WTC11 (cell line): ENCODE measurements at regions of chr16 and their contacts with region 1.

Region 1: DNA sequence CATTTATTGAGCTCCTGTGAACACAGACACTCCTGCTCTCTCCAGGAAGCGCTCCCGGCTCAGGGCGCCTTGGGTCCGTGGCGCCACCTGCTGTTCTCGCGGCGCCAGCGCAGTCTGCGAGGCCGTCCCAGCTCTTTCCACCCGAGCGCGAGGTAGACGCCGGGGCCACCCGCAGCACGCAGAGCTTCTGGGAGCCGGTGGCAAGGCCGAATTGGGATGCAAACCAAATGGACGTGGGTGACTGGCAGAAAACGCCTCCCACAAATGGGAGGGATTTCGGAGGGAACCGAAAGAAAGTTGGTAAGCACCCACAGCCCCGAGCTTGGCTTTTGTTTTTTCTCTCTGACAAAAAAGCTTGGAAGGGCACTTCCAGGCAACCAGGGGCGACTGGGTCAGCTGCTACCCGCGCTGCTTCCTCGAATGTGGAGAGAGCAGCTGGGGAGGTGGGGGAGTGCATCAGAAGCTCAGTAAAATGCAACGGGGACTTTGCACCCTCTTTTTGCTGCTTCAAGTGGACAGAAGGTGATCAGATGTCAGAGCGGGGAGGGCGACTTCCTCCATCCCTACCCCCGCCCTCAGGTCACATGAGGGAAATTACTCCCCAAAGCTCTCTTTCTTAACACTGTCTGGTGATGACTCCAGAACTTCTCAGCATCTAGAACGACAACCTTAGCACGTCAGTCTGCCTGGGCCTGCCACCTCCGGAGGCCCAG is 13.5 kb upstream of the N4BP1 start:
- DNase-seq: peak; percentile 81
- ATAC-seq: peak; percentile 93
- H3K4me3 Mint-ChIP-seq: peak overlapping the region; percentile 83
- H3K27ac Mint-ChIP-seq: peak overlapping the region; percentile 27; the same call in 1 of the 2 replicates
- H3K4me1 Mint-ChIP-seq: peaks cover 10% of the 10 kb centered on the region
- H3K27me3 Mint-ChIP-seq: no peaks in the 10 kb centered on the region; the same call in 1 of the 2 replicates
- CTCF ChIP-seq: peak; percentile 90

Region 2: DNA sequence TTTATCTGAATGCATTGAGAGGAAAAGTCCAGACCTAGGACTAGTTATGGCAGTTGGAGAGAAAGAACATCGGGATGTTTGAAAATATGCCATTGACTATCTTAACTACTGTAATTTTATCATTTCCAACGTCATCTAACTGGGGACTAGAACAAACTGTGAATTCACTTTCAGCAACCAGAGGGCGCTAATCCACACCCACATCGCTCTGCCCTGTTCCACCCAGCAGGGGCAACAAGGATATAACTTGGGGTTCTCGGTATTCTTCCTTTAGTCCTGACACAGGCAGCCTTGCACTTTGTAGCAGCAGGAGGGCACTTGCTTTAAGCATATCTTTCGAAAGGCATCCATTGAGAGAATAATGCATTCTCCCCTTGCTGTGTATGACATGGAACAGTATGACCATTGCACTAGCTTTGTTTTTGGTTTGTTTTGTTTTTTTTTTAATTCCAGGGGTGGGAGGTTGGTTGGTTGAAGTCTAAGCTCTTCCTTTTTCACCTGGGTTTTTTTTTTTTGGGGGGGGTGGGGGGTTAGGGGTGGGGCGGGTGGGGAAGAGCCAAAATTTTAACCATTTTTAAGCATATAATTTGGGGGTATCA is 269.8 kb before region 1 on chr16:
- CTCF ChIA-PET with region 1: interaction called, 26 read pairs
- POLR2A ChIA-PET with region 1: no interaction called
- DNase-seq: peak; percentile 70
- ATAC-seq: peak; percentile 91
- H3K4me3 Mint-ChIP-seq: no peak overlapping the region
- H3K27ac Mint-ChIP-seq: peak overlapping the region; percentile 86
- H3K4me1 Mint-ChIP-seq: peaks cover 5% of the 10 kb centered on the region
- H3K27me3 Mint-ChIP-seq: no peaks in the 10 kb centered on the region
- CTCF ChIP-seq: peak; percentile 76

Region 3: GRCh38 chr16:48499923-48500381 is 123.5 kb before region 1 on chr16:
- CTCF ChIA-PET with region 1: interaction called, 14 read pairs
- POLR2A ChIA-PET with region 1: no interaction called
- DNase-seq: no peak
- ATAC-seq: no peak
- H3K4me3 Mint-ChIP-seq: no peak overlapping the region
- H3K27ac Mint-ChIP-seq: no peak overlapping the region
- H3K4me1 Mint-ChIP-seq: peaks cover 11% of the 10 kb centered on the region
- H3K27me3 Mint-ChIP-seq: no peaks in the 10 kb centered on the region; the same call in 1 of the 2 replicates
- CTCF ChIP-seq: no peak

Region 4: GRCh38 chr16:48542020-48542473 is 81.4 kb before region 1 on chr16:
- CTCF ChIA-PET with region 1: interaction called, 63 read pairs
- POLR2A ChIA-PET with region 1: no interaction called
- DNase-seq: no peak
- ATAC-seq: peak; percentile 54
- H3K4me3 Mint-ChIP-seq: no peak overlapping the region
- H3K27ac Mint-ChIP-seq: no peak overlapping the region
- H3K4me1 Mint-ChIP-seq: peaks cover 7% of the 10 kb centered on the region; the same call in 1 of the 2 replicates
- H3K27me3 Mint-ChIP-seq: no peaks in the 10 kb centered on the region
- CTCF ChIP-seq: no peak

Region 5: GRCh38 chr16:48596326-48596725 is 27.1 kb before region 1 on chr16:
- CTCF ChIA-PET with region 1: interaction called, 23 read pairs
- POLR2A ChIA-PET with region 1: no interaction called
- DNase-seq: no peak
- ATAC-seq: no peak
- H3K4me3 Mint-ChIP-seq: no peak overlapping the region
- H3K27ac Mint-ChIP-seq: no peak overlapping the region
- H3K4me1 Mint-ChIP-seq: peaks cover 31% of the 10 kb centered on the region
- H3K27me3 Mint-ChIP-seq: peaks cover 11% of the 10 kb centered on the region; the same call in 1 of the 2 replicates
- CTCF ChIP-seq: no peak

Region 6: GRCh38 chr16:48704710-48705109 is 81.2 kb after region 1 on chr16:
- CTCF ChIA-PET with region 1: no interaction called
- POLR2A ChIA-PET with region 1: no interaction called
- DNase-seq: no peak
- ATAC-seq: no peak
- H3K4me3 Mint-ChIP-seq: no peak overlapping the region
- H3K27ac Mint-ChIP-seq: no peak overlapping the region
- H3K4me1 Mint-ChIP-seq: no peaks in the 10 kb centered on the region
- H3K27me3 Mint-ChIP-seq: peaks cover 3% of the 10 kb centered on the region; the same call in 1 of the 2 replicates
- CTCF ChIP-seq: no peak